WTC11 (cell line): ENCODE measurements at regions of chr20 and their contacts with region 1.

Region 1: GRCh38 chr20:50328222-50328959 is 137.8 kb downstream of the CEBPB start:
- DNase-seq: no peak
- ATAC-seq: no peak
- H3K4me3 Mint-ChIP-seq: no peak overlapping the region
- H3K27ac Mint-ChIP-seq: no peak overlapping the region
- H3K4me1 Mint-ChIP-seq: peaks cover 9% of the 10 kb centered on the region
- H3K27me3 Mint-ChIP-seq: no peaks in the 10 kb centered on the region
- CTCF ChIP-seq: no peak

Region 2: GRCh38 chr20:50276119-50276738 is 52.2 kb before region 1 on chr20:
- CTCF ChIA-PET with region 1: no interaction called
- POLR2A ChIA-PET with region 1: interaction called, 16 read pairs
- DNase-seq: no peak
- ATAC-seq: no peak
- H3K4me3 Mint-ChIP-seq: no peak overlapping the region
- H3K27ac Mint-ChIP-seq: no peak overlapping the region
- H3K4me1 Mint-ChIP-seq: no peaks in the 10 kb centered on the region
- H3K27me3 Mint-ChIP-seq: no peaks in the 10 kb centered on the region
- CTCF ChIP-seq: no peak

Region 3: DNA sequence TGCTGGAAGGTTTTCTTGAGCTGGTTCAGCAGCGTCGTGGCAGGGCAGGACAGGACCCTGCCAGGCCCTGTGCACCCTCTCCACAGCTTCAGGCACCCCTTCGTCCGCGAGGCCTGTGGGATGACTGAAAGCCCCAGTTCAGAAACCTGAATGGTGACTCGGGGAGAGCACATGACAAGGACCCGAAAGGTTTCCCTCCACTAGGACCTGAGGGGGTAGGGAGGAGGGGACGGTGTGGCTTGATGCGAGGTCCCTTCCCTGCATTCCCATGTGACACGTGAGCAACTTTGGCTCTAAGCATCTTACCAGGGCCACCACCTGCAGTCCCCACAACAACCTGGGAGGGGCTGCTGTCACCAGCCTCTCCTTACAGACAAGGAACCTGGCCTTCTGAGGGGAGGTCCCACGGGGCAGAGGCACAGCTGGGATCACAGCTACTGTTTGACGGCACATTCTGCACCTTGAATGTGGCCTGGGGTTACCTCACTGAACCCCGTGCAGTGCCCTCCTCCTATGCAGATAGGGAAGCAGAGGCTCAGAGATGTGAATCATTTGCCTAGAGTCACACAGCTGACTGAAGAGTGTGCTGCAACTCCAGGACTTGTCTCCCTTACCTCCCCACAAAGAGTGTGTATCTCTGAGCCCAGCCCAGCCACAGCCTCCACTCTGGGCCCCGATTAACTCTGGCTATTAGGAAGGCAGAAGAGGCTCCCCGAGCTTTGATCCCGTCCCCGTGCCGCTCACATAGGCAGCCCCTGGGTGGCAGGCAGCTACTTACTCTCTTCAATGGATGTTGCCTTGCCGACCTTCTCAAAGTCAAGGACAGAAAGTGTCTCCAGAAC is 266.4 kb after region 1 on chr20:
- CTCF ChIA-PET with region 1: no interaction called
- POLR2A ChIA-PET with region 1: no interaction called
- DNase-seq: peak; percentile 23
- ATAC-seq: peak; percentile 61
- H3K4me3 Mint-ChIP-seq: no peak overlapping the region
- H3K27ac Mint-ChIP-seq: no peak overlapping the region
- H3K4me1 Mint-ChIP-seq: peaks cover 11% of the 10 kb centered on the region
- H3K27me3 Mint-ChIP-seq: no peaks in the 10 kb centered on the region
- CTCF ChIP-seq: no peak